Caco-2 (cell line): ENCODE measurements at regions of chr19 and their contacts with region 1.

Region 1: DNA sequence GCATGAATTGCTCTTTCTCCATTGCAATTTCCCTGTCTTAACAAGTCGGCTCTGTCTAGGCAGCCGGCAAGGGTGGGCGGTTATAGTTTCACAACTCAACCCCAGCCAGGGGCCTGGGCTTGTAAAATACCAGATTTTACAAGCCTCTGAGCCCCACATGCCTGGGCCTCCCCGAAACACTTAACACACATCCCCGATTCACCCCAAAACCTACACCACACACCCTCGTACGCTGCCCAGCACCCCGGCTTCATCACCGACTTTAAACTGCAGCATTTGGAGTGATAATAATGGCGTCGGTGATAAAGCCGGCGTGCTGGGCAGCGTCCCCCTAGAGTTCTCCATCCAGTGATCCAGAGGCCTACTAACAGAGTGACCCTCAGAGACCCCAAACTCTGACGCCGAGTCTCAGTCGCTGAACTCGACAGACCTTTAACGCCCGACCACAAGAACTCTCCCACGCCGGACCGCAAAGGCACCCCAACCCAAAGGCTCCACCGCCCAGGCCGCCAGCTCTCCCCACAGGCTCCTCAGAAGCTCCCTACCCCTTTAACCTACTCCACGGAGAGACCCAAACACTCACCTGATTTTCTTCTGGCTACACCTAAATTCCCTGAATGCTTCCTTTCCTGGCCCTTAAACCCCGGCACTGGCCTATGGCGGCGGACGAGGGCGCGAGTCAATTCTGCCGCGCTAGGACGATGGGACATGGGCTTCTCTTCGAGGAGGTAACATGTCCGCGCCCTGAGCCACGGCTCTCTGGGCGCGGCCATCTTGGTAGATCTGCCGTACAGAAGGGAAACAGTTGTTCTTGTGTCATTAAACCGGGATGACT is at the start of gene ZNF649:
- DNase-seq: peak; percentile 79 to 80
- H3K4me3 ChIP-seq: peak within 1 kb of the TSS; percentile 45
- H3K4me3 Mint-ChIP-seq: peak within 1 kb of the TSS; percentile 88
- H3K27ac Mint-ChIP-seq: peak within 1 kb of the TSS; percentile 96
- H3K4me1 ChIP-seq: no peaks in the 10 kb centered on the region; the same call in 1 of the 2 replicates
- H3K4me1 Mint-ChIP-seq: peaks cover 7% of the 10 kb centered on the region
- H3K27me3 ChIP-seq: no peaks in the 10 kb centered on the region
- H3K27me3 Mint-ChIP-seq: no peaks in the 10 kb centered on the region
- CTCF ChIP-seq: no peak
- total RNA-seq, gene ZNF649: 3.7 and 7.9 TPM in 2 replicates

Region 2: DNA sequence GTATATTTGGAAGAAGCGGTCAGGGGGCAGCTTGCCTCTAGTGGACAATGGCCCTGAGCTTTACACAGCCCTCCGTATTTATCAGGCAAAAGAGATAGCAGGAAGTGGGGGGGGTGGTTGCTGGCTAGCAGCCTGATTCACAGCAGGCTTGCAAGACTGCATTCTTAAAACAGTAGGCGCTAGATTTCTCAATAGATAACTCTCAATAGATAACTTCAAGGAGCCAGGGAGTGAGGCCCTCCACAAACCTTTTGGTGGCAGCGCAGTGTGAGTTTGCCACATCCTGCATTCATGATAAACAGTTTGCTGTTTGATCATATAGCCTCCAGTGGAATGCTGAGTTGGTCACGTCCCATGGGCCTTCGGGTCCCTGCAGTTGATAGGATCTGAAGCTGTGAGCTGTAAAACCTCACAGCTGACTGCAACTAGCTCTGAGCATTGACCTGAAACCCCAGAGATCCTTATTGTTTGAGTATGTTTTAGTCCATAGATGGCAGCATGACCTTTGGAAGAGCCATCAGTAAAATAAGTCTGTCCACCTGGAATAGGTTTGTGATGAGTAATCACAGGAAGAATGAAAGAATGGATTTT is 97.3 kb before region 1 on chr19:
- CTCF ChIA-PET with region 1: no interaction called
- POLR2A ChIA-PET with region 1: no interaction called
- intact Hi-C with region 1: no loop called
- DNase-seq: peak in 1 of 2 experiments; percentile 43
- H3K4me3 ChIP-seq: no peak overlapping the region
- H3K4me3 Mint-ChIP-seq: no peak overlapping the region
- H3K27ac Mint-ChIP-seq: no peak overlapping the region
- H3K4me1 ChIP-seq: no peaks in the 10 kb centered on the region
- H3K4me1 Mint-ChIP-seq: no peaks in the 10 kb centered on the region
- H3K27me3 ChIP-seq: no peaks in the 10 kb centered on the region
- H3K27me3 Mint-ChIP-seq: no peaks in the 10 kb centered on the region
- CTCF ChIP-seq: no peak

Region 3: GRCh38 chr19:51873097-51873496 is 31.5 kb before region 1 on chr19:
- CTCF ChIA-PET with region 1: no interaction called
- POLR2A ChIA-PET with region 1: no interaction called
- intact Hi-C with region 1: no loop called
- DNase-seq: no peak
- H3K4me3 ChIP-seq: no peak overlapping the region
- H3K4me3 Mint-ChIP-seq: no peak overlapping the region
- H3K27ac Mint-ChIP-seq: no peak overlapping the region
- H3K4me1 ChIP-seq: no peaks in the 10 kb centered on the region
- H3K4me1 Mint-ChIP-seq: no peaks in the 10 kb centered on the region
- H3K27me3 ChIP-seq: no peaks in the 10 kb centered on the region
- H3K27me3 Mint-ChIP-seq: no peaks in the 10 kb centered on the region
- CTCF ChIP-seq: no peak

Region 4: GRCh38 chr19:51887522-51888498 is 16.7 kb before region 1 on chr19 and contains the start of gene ZNF577:
- CTCF ChIA-PET with region 1: no interaction called
- POLR2A ChIA-PET with region 1: no interaction called
- intact Hi-C with region 1: loop called (anchors 2 kb)
- DNase-seq: peak; percentile 92 to 94
- H3K4me3 ChIP-seq: peak within 1 kb of the TSS; percentile 65
- H3K4me3 Mint-ChIP-seq: peak within 1 kb of the TSS; percentile 95
- H3K27ac Mint-ChIP-seq: peak within 1 kb of the TSS; percentile 98
- H3K4me1 ChIP-seq: 0 out of 2 replicates have a peak, but pooled peaks cover 3% of the 10 kb centered on the region
- H3K4me1 Mint-ChIP-seq: no peaks in the 10 kb centered on the region
- H3K27me3 ChIP-seq: no peaks in the 10 kb centered on the region
- H3K27me3 Mint-ChIP-seq: no peaks in the 10 kb centered on the region
- CTCF ChIP-seq: no peak
- total RNA-seq, gene ZNF577: 4.9 and 7.7 TPM in 2 replicates

Region 5: GRCh38 chr19:51926784-51927742 is 22.5 kb after region 1 on chr19 and contains the start of gene ZNF613:
- CTCF ChIA-PET with region 1: no interaction called
- POLR2A ChIA-PET with region 1: no interaction called
- intact Hi-C with region 1: loop called (anchors 2 kb)
- DNase-seq: peak; percentile 68 to 75
- H3K4me3 ChIP-seq: peak within 1 kb of the TSS; percentile 57
- H3K4me3 Mint-ChIP-seq: peak within 1 kb of the TSS; percentile 82
- H3K27ac Mint-ChIP-seq: peak within 1 kb of the TSS; percentile 88
- H3K4me1 ChIP-seq: no peaks in the 10 kb centered on the region
- H3K4me1 Mint-ChIP-seq: no peaks in the 10 kb centered on the region
- H3K27me3 ChIP-seq: no peaks in the 10 kb centered on the region
- H3K27me3 Mint-ChIP-seq: no peaks in the 10 kb centered on the region
- CTCF ChIP-seq: no peak
- total RNA-seq, gene ZNF613: 1.3 and 2.2 TPM in 2 replicates